ENCODE measurements at regions of chr6 and their contacts with region 1.

Region 1: GRCh38 chr6:3023663-3024483 is 24.2 kb downstream of the NQO2 start:
- DNase-seq: peak; percentile 73 to 91 (median 78)
- H3K4me3 ChIP-seq: peak overlapping the region; percentile 67 to 72
- H3K4me3 Mint-ChIP-seq: peak overlapping the region; percentile 87 to 97 (median 92)
- H3K27ac ChIP-seq: peak overlapping the region; percentile 61
- H3K27ac Mint-ChIP-seq: peak overlapping the region; percentile 91 to 97 (median 92)
- H3K4me1 ChIP-seq: peaks cover 70% of the 10 kb centered on the region
- H3K4me1 Mint-ChIP-seq: peaks cover 34 to 69% (median 54%) of the 10 kb centered on the region in 4 donors
- H3K27me3 ChIP-seq: no peaks in the 10 kb centered on the region
- H3K27me3 Mint-ChIP-seq: no peaks in the 10 kb centered on the region

Region 2: DNA sequence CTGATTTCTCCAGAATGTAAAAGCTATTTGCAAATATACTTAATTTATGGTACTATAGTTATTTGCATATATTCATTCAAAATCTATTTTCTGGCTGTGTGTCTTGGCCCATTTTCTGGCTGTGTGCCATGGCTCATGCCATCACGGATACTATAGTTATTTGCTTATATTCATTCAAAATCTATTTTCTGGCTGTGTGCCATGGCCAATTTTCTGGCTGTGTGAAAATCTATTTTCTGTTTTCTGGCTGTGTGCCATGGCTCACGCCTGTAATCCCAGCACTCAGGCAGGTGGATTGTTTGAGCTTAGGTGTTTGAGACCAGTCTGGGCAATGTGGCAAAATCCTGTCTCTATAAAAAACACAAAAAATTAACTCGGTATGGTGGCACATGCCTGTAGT is 15.5 kb after region 1 on chr6:
- CTCF ChIA-PET with region 1: interaction called, 12 read pairs
- POLR2A ChIA-PET with region 1: interaction called, 8 read pairs
- intact Hi-C with region 1: no loop called
- DNase-seq: no peak
- H3K4me3 ChIP-seq: no peak overlapping the region
- H3K4me3 Mint-ChIP-seq: no peak overlapping the region
- H3K27ac ChIP-seq: no peak overlapping the region
- H3K27ac Mint-ChIP-seq: no peak overlapping the region
- H3K4me1 ChIP-seq: no peaks in the 10 kb centered on the region
- H3K4me1 Mint-ChIP-seq: no peaks in the 10 kb centered on the region
- H3K27me3 ChIP-seq: no peaks in the 10 kb centered on the region
- H3K27me3 Mint-ChIP-seq: no peaks in the 10 kb centered on the region

Region 3: GRCh38 chr6:3052481-3053230 is 28.8 kb after region 1 on chr6:
- CTCF ChIA-PET with region 1: interaction called, 8 read pairs
- POLR2A ChIA-PET with region 1: interaction called, 83 read pairs
- intact Hi-C with region 1: loop called (anchors 1 kb)
- DNase-seq: no peak
- H3K4me3 ChIP-seq: peak overlapping the region in 1 of 2 donors; percentile 61
- H3K4me3 Mint-ChIP-seq: peak overlapping the region; percentile 53 to 86 (median 78)
- H3K27ac ChIP-seq: peak overlapping the region; percentile 44
- H3K27ac Mint-ChIP-seq: peak overlapping the region in 6 of 7 donors; percentile 65 to 85 (median 80)
- H3K4me1 ChIP-seq: peaks cover 13% of the 10 kb centered on the region
- H3K4me1 Mint-ChIP-seq: peaks cover 6 to 32% (median 16%) of the 10 kb centered on the region in 4 donors
- H3K27me3 ChIP-seq: no peaks in the 10 kb centered on the region
- H3K27me3 Mint-ChIP-seq: no peaks in the 10 kb centered on the region

Region 4: DNA sequence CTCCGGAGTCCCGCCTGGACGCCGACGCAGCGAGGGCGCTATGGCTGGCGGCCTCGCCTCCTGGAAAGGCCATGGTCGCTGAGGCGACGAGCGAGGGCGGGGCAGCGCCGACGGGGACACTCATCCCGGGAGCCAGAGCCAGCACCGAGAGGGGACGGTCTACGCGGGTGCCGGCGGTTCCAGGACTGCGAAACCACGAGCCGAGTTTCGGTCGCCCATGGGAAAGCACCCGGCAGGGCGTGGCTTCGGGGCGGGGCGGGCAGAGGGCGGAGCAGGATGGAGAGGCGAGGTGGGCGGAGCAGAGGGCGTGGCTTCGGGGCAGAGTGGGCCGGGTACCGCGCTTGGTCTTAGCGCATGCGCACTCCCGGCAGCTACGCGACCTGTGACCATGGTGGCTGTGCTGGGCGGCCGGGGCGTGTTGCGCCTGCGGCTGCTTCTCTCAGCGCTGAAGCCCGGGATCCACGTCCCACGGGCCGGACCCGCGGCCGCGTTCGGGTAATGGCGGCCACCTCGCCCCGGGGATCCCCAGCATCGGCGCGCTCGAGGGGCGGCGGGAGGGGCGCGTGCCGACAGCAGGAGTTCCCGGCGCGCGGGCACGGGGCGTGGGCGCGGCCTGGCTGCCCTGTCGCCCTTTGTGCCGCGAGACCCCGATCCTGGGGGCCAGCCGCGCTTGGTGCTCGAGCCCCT is 94.6 kb after region 1 on chr6 and contains the start of gene BPHL:
- CTCF ChIA-PET with region 1: no interaction called
- POLR2A ChIA-PET with region 1: no interaction called
- intact Hi-C with region 1: loop called (anchors 1 kb)
- DNase-seq: peak; percentile 98 to 100 (median 99)
- H3K4me3 ChIP-seq: peak within 1 kb of the TSS; percentile 76 to 94
- H3K4me3 Mint-ChIP-seq: peak within 1 kb of the TSS; percentile 75 to 96 (median 91)
- H3K27ac ChIP-seq: peak within 1 kb of the TSS; percentile 87
- H3K27ac Mint-ChIP-seq: peak within 1 kb of the TSS; percentile 93 to 97 (median 96)
- H3K4me1 ChIP-seq: peaks cover 14% of the 10 kb centered on the region
- H3K4me1 Mint-ChIP-seq: peaks cover 7 to 20% (median 14%) of the 10 kb centered on the region in 4 donors
- H3K27me3 ChIP-seq: no peaks in the 10 kb centered on the region
- H3K27me3 Mint-ChIP-seq: no peaks in the 10 kb centered on the region
- total RNA-seq, gene BPHL: 11.9 to 13.7 TPM

Region 5: DNA sequence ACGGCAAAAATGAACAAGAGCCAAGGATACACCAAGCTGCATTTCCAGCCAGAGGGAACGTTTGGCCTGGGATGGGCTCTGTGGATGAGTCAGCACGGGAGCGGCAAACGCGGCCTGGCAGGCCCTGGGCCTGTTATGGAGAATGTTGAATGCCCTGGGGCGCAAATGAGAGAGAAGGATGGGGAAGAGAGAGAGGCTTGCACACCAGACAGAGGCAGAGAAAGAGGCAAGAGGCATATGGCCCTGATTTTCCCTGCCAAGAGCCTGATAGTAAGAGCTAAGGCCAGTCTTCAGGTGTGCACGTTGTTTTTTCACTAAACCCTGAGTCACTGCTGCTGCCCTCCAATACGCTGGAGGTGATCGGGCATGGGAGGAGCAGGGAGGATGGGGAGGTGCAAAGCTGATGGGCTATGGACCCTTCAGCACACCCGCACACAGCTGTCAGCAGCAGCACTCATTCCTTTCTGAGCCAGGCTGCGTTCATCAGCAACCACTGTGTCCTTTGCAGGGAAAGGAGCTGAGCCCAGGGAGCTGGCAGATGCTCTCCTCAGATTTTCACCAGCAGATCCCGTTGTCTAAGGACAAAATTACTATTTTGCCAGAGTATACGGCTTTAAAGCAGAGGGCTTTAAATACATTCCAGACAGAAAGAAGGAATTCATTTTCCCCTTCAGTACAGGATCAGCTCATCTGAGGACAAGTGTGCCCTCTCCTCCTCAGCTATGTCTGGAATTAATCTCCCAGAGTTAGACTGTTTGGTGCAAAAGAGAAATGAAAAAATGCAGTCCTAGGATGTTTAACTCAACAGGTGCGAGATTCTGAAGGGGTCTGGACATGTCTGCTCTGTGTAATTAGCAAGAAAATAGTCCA is 494.7 kb after region 1 on chr6:
- CTCF ChIA-PET with region 1: no interaction called
- POLR2A ChIA-PET with region 1: no interaction called
- intact Hi-C with region 1: no loop called
- DNase-seq: no peak
- H3K4me3 ChIP-seq: no peak overlapping the region
- H3K4me3 Mint-ChIP-seq: no peak overlapping the region
- H3K27ac ChIP-seq: no peak overlapping the region
- H3K27ac Mint-ChIP-seq: no peak overlapping the region
- H3K4me1 ChIP-seq: no peaks in the 10 kb centered on the region
- H3K4me1 Mint-ChIP-seq: no peaks in the 10 kb centered on the region
- H3K27me3 ChIP-seq: no peaks in the 10 kb centered on the region
- H3K27me3 Mint-ChIP-seq: peaks cover 14 to 19% of the 10 kb centered on the region in 2 donors